Activated CD4-positive, alpha-beta memory T cell treated with anti-CD3 and anti-CD28 coated beads for 36 hours (primary cell): ENCODE measurements at regions of chr2 and their contacts with region 1.

Region 1: DNA sequence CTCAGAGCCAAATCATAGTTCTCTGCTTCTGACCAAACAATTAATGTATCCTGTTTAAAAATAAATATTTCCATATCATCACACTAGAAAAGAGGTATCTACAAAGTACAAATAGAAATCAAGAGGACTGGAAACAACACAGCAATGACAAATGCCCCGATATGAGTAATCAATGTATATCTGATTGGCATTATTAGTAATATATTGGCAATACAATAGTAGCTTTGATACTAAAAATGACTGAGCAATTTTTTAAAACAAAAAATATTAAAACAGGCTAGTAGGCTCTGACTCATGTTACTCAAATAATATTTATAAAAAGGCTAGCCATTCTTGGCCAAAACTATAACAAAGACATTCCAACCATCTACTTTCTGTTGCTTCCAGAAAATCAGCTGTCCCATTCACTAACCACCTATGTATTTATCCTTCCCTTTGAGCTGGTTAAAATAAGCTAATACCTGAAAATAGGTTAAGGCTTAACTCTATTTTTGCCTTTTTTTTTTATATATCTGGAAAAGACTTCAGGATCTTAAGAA is 13.3 kb downstream of the PPP4R3B start:
- DNase-seq: no peak
- H3K4me3 Mint-ChIP-seq: no peak overlapping the region
- H3K27ac Mint-ChIP-seq: no peak overlapping the region
- H3K4me1 Mint-ChIP-seq: peaks cover 50% of the 10 kb centered on the region
- H3K27me3 Mint-ChIP-seq: no peaks in the 10 kb centered on the region

Region 2: GRCh38 chr2:55550368-55551102 is 53.6 kb before region 1 on chr2:
- CTCF ChIA-PET with region 1: no interaction called
- POLR2A ChIA-PET with region 1: no interaction called
- intact Hi-C with region 1: loop called (anchors 5 kb)
- DNase-seq: no peak
- H3K4me3 Mint-ChIP-seq: no peak overlapping the region
- H3K27ac Mint-ChIP-seq: no peak overlapping the region
- H3K4me1 Mint-ChIP-seq: no peaks in the 10 kb centered on the region
- H3K27me3 Mint-ChIP-seq: no peaks in the 10 kb centered on the region

Region 3: DNA sequence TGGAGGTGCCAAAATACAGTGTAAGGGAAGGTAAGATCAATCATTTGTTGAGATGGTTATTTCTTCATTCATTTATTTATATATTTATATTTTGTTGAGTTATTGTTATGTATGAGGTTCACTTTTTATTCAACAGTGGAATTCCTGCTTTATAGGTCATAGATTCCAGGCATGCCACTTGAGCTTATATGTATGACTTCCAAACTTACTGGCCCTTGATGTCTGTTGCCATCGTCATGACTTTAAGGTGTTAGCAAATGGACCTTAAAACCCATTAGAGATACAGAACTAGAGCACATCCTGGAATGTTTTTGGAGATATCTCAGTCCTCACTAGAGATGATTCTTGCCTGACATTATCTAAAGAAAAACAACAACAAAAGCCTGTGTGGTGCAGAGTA is 605.6 kb after region 1 on chr2:
- CTCF ChIA-PET with region 1: no interaction called
- POLR2A ChIA-PET with region 1: no interaction called
- intact Hi-C with region 1: no loop called
- DNase-seq: no peak
- H3K4me3 Mint-ChIP-seq: no peak overlapping the region
- H3K27ac Mint-ChIP-seq: no peak overlapping the region
- H3K4me1 Mint-ChIP-seq: no peaks in the 10 kb centered on the region
- H3K27me3 Mint-ChIP-seq: no peaks in the 10 kb centered on the region